ENCODE measurements at regions of chr1 and their contacts with region 1.

Region 1: GRCh38 chr1:32714277-32714676 is 11.7 kb upstream of the SYNC start:
- DNase-seq: no peak
- H3K4me3 ChIP-seq: no peak overlapping the region
- H3K27ac ChIP-seq: no peak overlapping the region
- H3K27me3 ChIP-seq: no peaks in the 10 kb centered on the region
- CTCF ChIP-seq: no peak

Region 2: GRCh38 chr1:32695098-32695904 is 19.0 kb before region 1 on chr1:
- CTCF ChIA-PET with region 1: interaction called, 16 read pairs
- POLR2A ChIA-PET with region 1: no interaction called
- DNase-seq: no peak
- H3K4me3 ChIP-seq: no peak overlapping the region
- H3K27ac ChIP-seq: no peak overlapping the region
- H3K27me3 ChIP-seq: no peaks in the 10 kb centered on the region
- CTCF ChIP-seq: no peak

Region 3: GRCh38 chr1:32724678-32725614 is 10.7 kb after region 1 on chr1:
- CTCF ChIA-PET with region 1: interaction called, 24 read pairs
- POLR2A ChIA-PET with region 1: interaction called, 8 read pairs
- DNase-seq: peak; percentile 88
- H3K4me3 ChIP-seq: peak overlapping the region; percentile 20; the same call in 1 of the 2 replicates
- H3K27ac ChIP-seq: peak overlapping the region; percentile 68
- H3K27me3 ChIP-seq: no peaks in the 10 kb centered on the region
- CTCF ChIP-seq: no peak

Region 4: GRCh38 chr1:32761253-32761880 is 47.1 kb after region 1 on chr1:
- CTCF ChIA-PET with region 1: interaction called, 14 read pairs
- POLR2A ChIA-PET with region 1: no interaction called
- DNase-seq: no peak
- H3K4me3 ChIP-seq: no peak overlapping the region
- H3K27ac ChIP-seq: peak overlapping the region; percentile 57
- H3K27me3 ChIP-seq: no peaks in the 10 kb centered on the region
- CTCF ChIP-seq: no peak